MCF 10A (cell line): ENCODE measurements at regions of chr6 and their contacts with region 1.

Region 1: GRCh38 chr6:41066867-41067304 is 5.3 kb downstream of the OARD1 start:
- DNase-seq: peak; percentile 75
- H3K4me3 Mint-ChIP-seq: no peak overlapping the region
- H3K27ac Mint-ChIP-seq: peak overlapping the region; percentile 79
- H3K4me1 Mint-ChIP-seq: peaks cover 15% of the 10 kb centered on the region
- H3K27me3 Mint-ChIP-seq: no peaks in the 10 kb centered on the region
- CTCF ChIP-seq: peak; percentile 70

Region 2: GRCh38 chr6:39980839-39981580 is 1085.9 kb before region 1 on chr6:
- CTCF ChIA-PET with region 1: interaction called, 8 read pairs
- POLR2A ChIA-PET with region 1: no interaction called
- intact Hi-C with region 1: loop called (anchors 2 kb)
- DNase-seq: peak; percentile 63
- H3K4me3 Mint-ChIP-seq: no peak overlapping the region
- H3K27ac Mint-ChIP-seq: no peak overlapping the region
- H3K4me1 Mint-ChIP-seq: no peaks in the 10 kb centered on the region
- H3K27me3 Mint-ChIP-seq: no peaks in the 10 kb centered on the region
- CTCF ChIP-seq: peak; percentile 46

Region 3: DNA sequence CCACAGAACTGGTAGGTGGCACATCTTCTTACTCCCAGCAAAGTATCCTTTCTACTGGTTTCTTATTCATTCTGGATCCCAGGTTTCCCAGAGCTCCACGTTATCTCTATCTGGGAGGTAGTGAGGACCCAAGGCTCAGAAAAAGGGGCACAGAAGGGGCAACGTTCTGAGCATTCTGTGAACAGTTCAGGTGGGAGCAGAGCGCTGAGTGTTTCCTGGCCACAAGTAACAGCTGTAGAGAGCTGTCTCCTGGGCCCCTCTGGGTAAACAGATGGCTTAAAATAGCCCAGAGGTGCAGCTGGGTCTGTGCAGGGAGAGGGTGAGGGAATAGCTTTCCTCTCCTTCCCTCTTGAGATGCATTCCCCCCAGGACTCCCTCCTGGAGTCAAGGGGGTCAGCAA is 11.7 kb before region 1 on chr6:
- CTCF ChIA-PET with region 1: interaction called, 38 read pairs
- POLR2A ChIA-PET with region 1: interaction called, 7 read pairs
- intact Hi-C with region 1: no loop called
- DNase-seq: no peak
- H3K4me3 Mint-ChIP-seq: no peak overlapping the region
- H3K27ac Mint-ChIP-seq: no peak overlapping the region
- H3K4me1 Mint-ChIP-seq: peaks cover 4% of the 10 kb centered on the region
- H3K27me3 Mint-ChIP-seq: no peaks in the 10 kb centered on the region
- CTCF ChIP-seq: no peak